ENCODE measurements at regions of chr16 and their contacts with region 1.

Region 1: DNA sequence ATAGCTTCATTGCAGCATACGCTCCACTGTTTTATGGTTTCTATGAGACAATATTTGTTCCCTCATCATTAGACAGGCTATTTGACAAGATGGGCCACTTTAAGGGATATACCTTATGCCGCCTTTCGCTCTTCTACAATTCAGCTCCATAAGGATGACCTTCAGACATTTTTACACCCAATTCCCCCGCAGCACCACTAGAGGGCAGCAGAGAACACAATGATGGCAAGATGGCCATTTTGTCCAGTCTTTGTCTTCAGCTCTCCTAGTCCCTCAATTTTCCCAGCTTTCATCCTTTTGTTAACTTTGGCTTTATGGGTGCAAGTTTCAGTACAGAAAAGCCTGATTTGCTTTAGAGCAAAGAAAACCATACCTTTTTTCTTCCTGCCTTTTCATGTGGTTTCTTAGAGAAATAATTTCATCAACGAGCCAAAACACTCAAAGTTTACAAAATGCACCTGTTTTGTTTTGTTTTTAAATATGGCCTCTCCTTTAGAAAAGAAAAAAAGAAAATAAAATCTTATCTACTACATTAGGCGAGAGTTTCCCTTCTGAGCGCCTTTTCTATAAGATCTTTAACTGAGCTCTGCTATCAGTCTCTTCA is 355.3 kb downstream of the TOX3 start:
- DNase-seq: peak; percentile 29
- ATAC-seq: no peak
- H3K4me3 ChIP-seq: no peak overlapping the region
- H3K27ac ChIP-seq: no peak overlapping the region
- H3K4me1 ChIP-seq: no peaks in the 10 kb centered on the region
- H3K27me3 ChIP-seq: no peaks in the 10 kb centered on the region
- CTCF ChIP-seq: peak; percentile 39 to 89 (median 80); a peak in 5 of 6 replicates
- POLR2A ChIP-seq: no peak
- RAD21 ChIP-seq: peak; percentile 71

Region 2: GRCh38 chr16:50696575-50697420 is 1494.8 kb before region 1 on chr16:
- CTCF ChIA-PET with region 1: no interaction called
- POLR2A ChIA-PET with region 1: no interaction called
- RAD21 ChIA-PET with region 1: no interaction called
- intact Hi-C with region 1: no loop called
- DNase-seq: peak; percentile 81
- ATAC-seq: peak; percentile 86
- H3K4me3 ChIP-seq: peak overlapping the region in 1 of 2 experiments; percentile 12; a peak in 1 of 4 replicates
- H3K27ac ChIP-seq: peak overlapping the region; percentile 41; the same call in 1 of the 2 replicates
- H3K4me1 ChIP-seq: peaks cover 18 to 34% of the 10 kb centered on the region in 2 experiments
- H3K27me3 ChIP-seq: no peaks in the 10 kb centered on the region
- CTCF ChIP-seq: no peak
- POLR2A ChIP-seq: no peak
- RAD21 ChIP-seq: no peak

Region 3: DNA sequence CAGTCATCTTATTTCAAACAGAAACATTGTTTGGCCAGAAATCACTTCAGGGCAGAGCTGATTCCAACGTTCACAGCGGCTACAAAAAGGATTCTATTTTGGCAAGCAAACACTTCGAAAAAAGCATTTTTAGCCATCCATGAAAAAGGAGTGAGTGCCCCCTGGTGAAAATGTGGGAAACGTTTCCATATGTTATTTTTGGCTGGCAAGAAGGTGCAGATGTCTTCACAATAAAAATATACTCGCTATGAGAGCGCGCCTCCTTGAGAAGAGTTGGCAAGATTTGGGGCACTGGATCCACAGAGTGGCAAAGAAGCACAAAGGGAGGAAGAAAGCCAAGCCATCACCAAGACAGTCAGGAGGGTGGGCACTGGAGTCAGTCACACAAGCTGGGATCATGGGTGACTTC is 670.0 kb after region 1 on chr16:
- CTCF ChIA-PET with region 1: interaction called, 16 read pairs
- POLR2A ChIA-PET with region 1: no interaction called
- RAD21 ChIA-PET with region 1: no interaction called
- intact Hi-C with region 1: loop called (anchors 1 kb)
- DNase-seq: peak; percentile 4
- ATAC-seq: no peak
- H3K4me3 ChIP-seq: no peak overlapping the region
- H3K27ac ChIP-seq: no peak overlapping the region
- H3K4me1 ChIP-seq: no peaks in the 10 kb centered on the region
- H3K27me3 ChIP-seq: no peaks in the 10 kb centered on the region
- CTCF ChIP-seq: peak; percentile 10 to 49 (median 34); a peak in 5 of 6 replicates
- POLR2A ChIP-seq: no peak
- RAD21 ChIP-seq: peak; percentile 57

Region 4: DNA sequence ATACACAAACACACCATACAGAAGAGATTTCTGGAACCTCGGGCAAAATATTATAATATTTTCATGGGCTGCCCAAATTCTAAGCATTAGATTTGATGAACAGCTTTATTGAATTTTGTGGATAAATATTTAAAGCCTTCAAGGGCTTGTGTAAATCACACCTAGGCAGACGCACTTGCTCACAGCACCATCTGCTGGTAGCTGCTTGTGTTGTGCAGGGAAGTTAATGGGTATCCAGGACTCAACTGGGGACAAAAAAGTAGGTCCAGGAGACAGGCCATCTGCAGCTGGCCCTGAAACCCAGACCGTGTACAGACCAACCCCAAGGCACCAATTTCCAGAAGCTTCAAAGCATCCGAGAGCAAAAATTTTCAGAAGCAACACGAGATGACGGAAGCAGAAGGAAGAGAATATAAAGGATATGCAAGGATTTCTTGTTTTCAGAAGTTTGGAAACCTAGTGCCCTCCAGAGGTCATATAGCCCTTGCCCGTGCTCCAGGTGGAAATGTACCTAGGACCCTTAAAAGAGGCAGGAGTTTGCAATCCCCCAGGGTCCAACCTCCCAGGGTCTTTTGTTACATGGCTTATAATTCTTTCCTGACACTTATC is 721.0 kb after region 1 on chr16:
- CTCF ChIA-PET with region 1: interaction called, 8 read pairs
- POLR2A ChIA-PET with region 1: no interaction called
- RAD21 ChIA-PET with region 1: interaction called, 3 to 7 read pairs
- intact Hi-C with region 1: loop called (anchors 1 kb)
- DNase-seq: peak; percentile 55
- ATAC-seq: peak; percentile 94
- H3K4me3 ChIP-seq: no peak overlapping the region
- H3K27ac ChIP-seq: no peak overlapping the region
- H3K4me1 ChIP-seq: no peaks in the 10 kb centered on the region
- H3K27me3 ChIP-seq: 0 out of 2 replicates have a peak, but pooled peaks cover under 1% of the 10 kb centered on the region
- CTCF ChIP-seq: peak; percentile 52 to 83 (median 81); a peak in 4 of 6 replicates
- POLR2A ChIP-seq: no peak
- RAD21 ChIP-seq: peak; percentile 75

Region 5: DNA sequence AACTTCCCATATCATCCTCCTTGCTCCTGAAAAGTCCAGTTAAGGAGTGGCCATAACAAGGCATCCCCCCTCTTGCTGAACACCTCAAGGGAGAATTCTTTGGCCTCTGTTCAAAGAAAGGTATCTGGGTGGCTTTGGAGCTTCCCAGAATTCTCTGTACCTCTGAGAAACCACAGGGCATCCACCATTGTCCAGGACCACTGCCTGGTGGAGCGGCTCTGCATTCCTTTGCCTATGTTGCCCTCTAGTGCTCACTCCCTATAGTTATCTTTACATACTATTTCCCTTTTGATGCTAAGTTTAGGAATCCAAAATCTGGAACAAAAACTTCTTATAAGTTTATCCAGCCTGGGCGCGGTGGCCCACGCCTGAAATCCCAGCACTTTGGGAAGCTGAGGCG is 830.7 kb after region 1 on chr16:
- CTCF ChIA-PET with region 1: interaction called, 9 read pairs
- POLR2A ChIA-PET with region 1: no interaction called
- RAD21 ChIA-PET with region 1: interaction called in 1 of 2 experiments, 5 read pairs
- intact Hi-C with region 1: loop called (anchors 1 kb)
- DNase-seq: peak; percentile 41
- ATAC-seq: peak; percentile 97
- H3K4me3 ChIP-seq: no peak overlapping the region
- H3K27ac ChIP-seq: no peak overlapping the region
- H3K4me1 ChIP-seq: no peaks in the 10 kb centered on the region
- H3K27me3 ChIP-seq: no peaks in the 10 kb centered on the region
- CTCF ChIP-seq: peak; percentile 45 to 68 (median 47); a peak in 4 of 6 replicates
- POLR2A ChIP-seq: no peak
- RAD21 ChIP-seq: peak; percentile 79